HEK293T (cell line): ENCODE measurements at regions of chr4 and their contacts with region 1.

Region 1: DNA sequence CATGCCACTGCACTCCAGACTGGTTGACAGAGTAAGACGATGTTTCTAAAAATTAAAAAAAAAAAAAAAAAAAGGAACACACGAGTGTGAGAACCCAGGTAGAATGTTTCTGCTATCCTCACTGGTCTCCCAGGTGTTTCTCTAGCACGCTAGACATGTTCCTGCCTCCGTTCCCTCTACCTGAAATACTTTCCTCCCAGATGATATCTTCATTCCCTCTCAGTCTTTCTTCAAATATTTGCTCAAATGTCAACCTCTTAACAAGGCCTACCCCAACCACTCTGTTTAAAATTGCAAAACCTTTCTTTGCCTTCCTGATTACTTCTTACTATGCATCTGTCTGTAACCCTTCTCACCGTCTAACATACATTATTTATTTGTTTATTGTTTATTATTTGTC is 59.5 kb upstream of the ABCG2 start:
- DNase-seq: no peak

Region 2: GRCh38 chr4:88158489-88159243 is 59.3 kb before region 1 on chr4 and contains the start of gene ABCG2:
- CTCF ChIA-PET with region 1: no interaction called
- POLR2A ChIA-PET with region 1: no interaction called
- DNase-seq: peak; percentile 49

Region 3: DNA sequence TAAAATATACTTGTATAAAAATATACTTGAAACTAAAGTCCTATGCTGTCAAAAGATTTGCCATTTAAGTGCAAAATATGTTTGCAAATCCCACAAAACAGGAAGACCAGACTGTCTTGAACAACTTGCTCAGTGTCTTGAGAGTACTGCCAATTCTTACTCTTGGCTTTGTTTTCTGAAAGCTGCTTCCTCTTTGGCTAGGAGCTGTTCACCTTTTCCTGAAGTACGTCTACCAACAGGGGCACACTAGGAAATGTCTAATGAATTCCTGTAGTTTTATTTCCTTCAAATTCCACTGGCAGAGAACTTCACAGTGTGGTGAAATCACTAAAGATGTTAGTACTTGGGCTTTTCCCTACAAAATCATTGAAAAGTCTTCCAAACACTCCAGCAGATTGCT is 13.0 kb before region 1 on chr4:
- CTCF ChIA-PET with region 1: no interaction called
- POLR2A ChIA-PET with region 1: no interaction called
- DNase-seq: no peak

Region 4: DNA sequence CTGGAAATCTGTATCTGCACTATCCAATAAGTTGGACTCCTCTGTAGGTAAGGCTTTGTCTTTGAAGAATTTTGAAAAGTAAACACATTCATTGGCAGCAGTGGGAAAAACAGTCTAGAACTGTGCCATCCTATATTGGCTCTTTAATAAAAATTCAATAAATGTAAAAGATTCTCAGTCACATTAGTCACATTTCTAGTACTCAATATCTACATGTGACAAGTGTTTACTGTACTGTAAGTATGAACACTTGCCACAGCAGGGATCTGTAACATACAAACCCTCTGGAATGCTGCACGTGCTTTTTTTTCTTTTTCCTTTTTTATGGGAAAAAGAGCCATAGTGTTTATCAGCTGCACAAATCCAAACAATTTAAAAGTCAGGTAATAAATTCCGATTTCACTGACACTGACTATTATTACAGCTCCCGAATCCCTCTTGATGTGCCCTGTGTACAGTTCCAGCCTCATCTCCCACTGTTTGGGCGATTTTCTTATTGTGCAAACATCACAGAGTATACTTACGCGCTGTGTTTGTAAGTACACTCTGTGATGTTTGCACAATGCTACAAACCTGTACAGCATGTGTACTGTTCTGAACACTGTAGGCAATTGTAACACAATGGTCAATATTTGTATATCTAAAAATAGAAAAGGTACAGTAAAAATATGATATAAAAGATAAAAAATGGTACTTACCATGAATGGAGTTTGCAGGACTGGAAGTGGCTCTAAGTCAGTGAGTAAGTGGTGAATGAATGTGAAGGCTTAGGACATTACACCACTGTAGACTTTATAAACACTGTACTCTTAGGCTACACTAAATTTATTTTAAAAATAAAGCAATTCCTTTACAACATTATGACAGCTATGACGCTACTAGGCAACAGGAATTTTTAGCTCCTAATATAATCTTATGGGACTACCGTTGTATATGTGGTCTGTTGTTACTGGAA is 296.9 kb after region 1 on chr4:
- CTCF ChIA-PET with region 1: interaction called, 36 read pairs
- POLR2A ChIA-PET with region 1: no interaction called
- DNase-seq: no peak